ENCODE measurements at regions of chr9 and their contacts with region 1.

Region 1: GRCh38 chr9:97660340-97660739 is 26.7 kb downstream of the NCBP1 start:
- DNase-seq: no peak
- ATAC-seq: no peak
- H3K4me3 ChIP-seq: no peak overlapping the region
- H3K4me3 Mint-ChIP-seq: no peak overlapping the region
- H3K27ac ChIP-seq: no peak overlapping the region
- H3K27ac Mint-ChIP-seq: peak overlapping the region in 7 of 9 donors; percentile 1 to 63 (median 52)
- H3K4me1 ChIP-seq: no peaks in the 10 kb centered on the region
- H3K4me1 Mint-ChIP-seq: peaks cover 5 to 16% (median 10%) of the 10 kb centered on the region in 7 donors
- H3K27me3 ChIP-seq: no peaks in the 10 kb centered on the region
- H3K27me3 Mint-ChIP-seq: no peaks in the 10 kb centered on the region

Region 2: GRCh38 chr9:97598461-97599288 is 61.7 kb before region 1 on chr9:
- CTCF ChIA-PET with region 1: no interaction called
- POLR2A ChIA-PET with region 1: no interaction called
- intact Hi-C with region 1: no loop called
- DNase-seq: peak; percentile 26 to 73 (median 67)
- ATAC-seq: peak; percentile 93
- H3K4me3 ChIP-seq: no peak overlapping the region
- H3K4me3 Mint-ChIP-seq: peak overlapping the region in 9 of 10 donors; percentile 19 to 73 (median 60)
- H3K27ac ChIP-seq: no peak overlapping the region
- H3K27ac Mint-ChIP-seq: peak overlapping the region in 4 of 9 donors; percentile 4 to 49 (median 20)
- H3K4me1 ChIP-seq: peaks cover 4% of the 10 kb centered on the region in 2 donors
- H3K4me1 Mint-ChIP-seq: peaks cover 6 to 8% (median 6%) of the 10 kb centered on the region in 7 donors
- H3K27me3 ChIP-seq: no peaks in the 10 kb centered on the region
- H3K27me3 Mint-ChIP-seq: peaks cover 0 to 2% (median 0%) of the 10 kb centered on the region in 5 donors

Region 3: GRCh38 chr9:97675655-97676054 is 15.3 kb after region 1 on chr9:
- CTCF ChIA-PET with region 1: no interaction called
- POLR2A ChIA-PET with region 1: interaction called, 4 read pairs
- intact Hi-C with region 1: loop called in 1 of 2 experiments (anchors 2 kb)
- DNase-seq: no peak
- ATAC-seq: no peak
- H3K4me3 ChIP-seq: no peak overlapping the region
- H3K4me3 Mint-ChIP-seq: no peak overlapping the region
- H3K27ac ChIP-seq: no peak overlapping the region
- H3K27ac Mint-ChIP-seq: peak overlapping the region in 2 of 9 donors; percentile 10 to 69
- H3K4me1 ChIP-seq: no peaks in the 10 kb centered on the region
- H3K4me1 Mint-ChIP-seq: peaks cover 0 to 20% (median 6%) of the 10 kb centered on the region in 7 donors
- H3K27me3 ChIP-seq: no peaks in the 10 kb centered on the region
- H3K27me3 Mint-ChIP-seq: no peaks in the 10 kb centered on the region

Measured in naive thymus-derived CD4-positive, alpha-beta T cell (primary cell).